Heart right ventricle (tissue), 16 donors: ENCODE measurements at regions of chr12 and their contacts with region 1.

Region 1: GRCh38 chr12:114684098-114684869 is at the start of gene TBX3:
- DNase-seq: peak; percentile 92 to 93
- ATAC-seq: peak; percentile 86 to 96 (median 94)
- H3K4me3 ChIP-seq: peak within 1 kb of the TSS; percentile 48 to 88 (median 76)
- H3K27ac ChIP-seq: peak within 1 kb of the TSS; percentile 78 to 95 (median 88)
- H3K4me1 ChIP-seq: peaks cover 4 to 34% (median 22%) of the 10 kb centered on the region in 9 donors
- H3K27me3 ChIP-seq: peaks cover 17 to 100% (median 43%) of the 10 kb centered on the region in 7 donors
- CTCF ChIP-seq: peak; percentile 19 to 72 (median 45)
- total RNA-seq, gene TBX3: 4.0 to 32.4 (median 11.4) TPM

Region 2: DNA sequence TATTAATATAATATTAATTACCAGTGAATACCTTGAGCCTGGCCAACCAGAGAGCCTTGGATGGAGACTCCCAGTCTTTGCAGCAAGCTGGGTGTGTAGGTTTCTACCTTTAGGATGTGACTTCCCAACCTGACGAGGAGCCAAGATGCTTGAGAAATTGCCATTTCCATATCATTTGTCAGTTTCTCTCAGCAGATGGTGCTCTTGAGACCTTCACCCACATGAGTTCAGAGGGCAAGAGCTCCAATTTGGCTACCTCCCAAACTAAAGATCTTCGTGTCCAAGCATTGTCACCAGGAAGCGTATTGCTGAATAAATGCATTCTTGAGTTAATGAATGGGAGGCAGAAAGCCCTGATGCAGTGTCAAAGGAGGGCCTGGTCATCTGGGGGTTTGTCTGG is 171.9 kb before region 1 on chr12:
- intact Hi-C with region 1: no loop called
- DNase-seq: no peak
- ATAC-seq: no peak
- H3K4me3 ChIP-seq: no peak overlapping the region
- H3K27ac ChIP-seq: no peak overlapping the region
- H3K4me1 ChIP-seq: no peaks in the 10 kb centered on the region
- H3K27me3 ChIP-seq: peaks cover 0 to 63% (median 19%) of the 10 kb centered on the region in 7 donors
- CTCF ChIP-seq: no peak

Region 3: GRCh38 chr12:115013236-115013981 is 329.1 kb after region 1 on chr12:
- intact Hi-C with region 1: loop called in 1 of 10 experiments (anchors 5 kb)
- DNase-seq: peak; percentile 27 to 39
- ATAC-seq: peak; percentile 30 to 86 (median 66)
- H3K4me3 ChIP-seq: no peak overlapping the region
- H3K27ac ChIP-seq: peak overlapping the region in 8 of 10 donors; percentile 6 to 57 (median 34)
- H3K4me1 ChIP-seq: peaks cover 0 to 24% (median 0%) of the 10 kb centered on the region in 9 donors
- H3K27me3 ChIP-seq: peaks cover 0 to 18% (median 0%) of the 10 kb centered on the region in 7 donors
- CTCF ChIP-seq: no peak

Region 4: GRCh38 chr12:115341442-115341841 is 657.2 kb after region 1 on chr12:
- intact Hi-C with region 1: loop called in 3 of 10 experiments (anchors 5 to 10 kb)
- DNase-seq: peak; percentile 23 to 81
- ATAC-seq: peak; percentile 55 to 82 (median 64)
- H3K4me3 ChIP-seq: no peak overlapping the region
- H3K27ac ChIP-seq: peak overlapping the region in 6 of 10 donors; percentile 21 to 76 (median 50)
- H3K4me1 ChIP-seq: peaks cover 0 to 27% (median 11%) of the 10 kb centered on the region in 9 donors
- H3K27me3 ChIP-seq: no peaks in the 10 kb centered on the region
- CTCF ChIP-seq: no peak

Region 5: GRCh38 chr12:115451780-115452736 is 767.8 kb after region 1 on chr12:
- intact Hi-C with region 1: loop called in 1 of 10 experiments (anchors 5 kb)
- DNase-seq: peak; percentile 63 to 67
- ATAC-seq: peak; percentile 66 to 85 (median 74)
- H3K4me3 ChIP-seq: peak overlapping the region in 9 of 10 donors; percentile 24 to 53 (median 39)
- H3K27ac ChIP-seq: peak overlapping the region in 7 of 10 donors; percentile 51 to 81 (median 72)
- H3K4me1 ChIP-seq: peaks cover 0 to 24% (median 4%) of the 10 kb centered on the region in 9 donors
- H3K27me3 ChIP-seq: peaks cover 0 to 29% (median 0%) of the 10 kb centered on the region in 7 donors
- CTCF ChIP-seq: no peak

Region 6: DNA sequence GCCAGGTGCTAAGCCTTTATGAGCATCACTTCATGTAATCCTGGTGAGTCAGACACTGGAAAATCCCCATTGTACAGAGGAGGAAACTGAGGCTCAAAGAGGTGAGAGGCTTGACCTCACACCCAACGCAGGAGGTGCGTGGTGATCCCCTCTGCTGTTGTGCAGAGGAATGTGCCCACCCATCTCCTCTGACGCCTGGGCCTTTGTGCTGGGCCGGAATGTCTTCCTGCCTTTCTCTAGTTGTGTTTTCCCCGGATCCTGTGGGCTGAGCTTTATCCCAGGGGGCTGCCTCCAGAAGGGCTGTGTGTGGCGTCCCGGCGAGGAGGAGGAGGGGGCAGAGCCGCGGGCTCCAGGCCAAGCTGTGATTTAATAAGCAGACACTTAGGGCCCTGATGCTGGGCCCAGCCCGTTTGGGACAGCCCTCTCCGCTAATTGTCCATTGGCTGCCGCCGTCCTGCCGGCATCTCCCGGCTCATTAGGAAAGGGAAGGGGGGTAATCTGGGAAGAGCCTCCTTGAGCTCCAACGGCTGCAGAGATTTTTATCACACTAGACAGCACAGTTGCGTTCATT is 939.6 kb after region 1 on chr12:
- intact Hi-C with region 1: loop called in 2 of 10 experiments (anchors 5 to 10 kb)
- DNase-seq: peak; percentile 77 to 87
- ATAC-seq: peak; percentile 91 to 96 (median 94)
- H3K4me3 ChIP-seq: no peak overlapping the region
- H3K27ac ChIP-seq: peak overlapping the region in 7 of 10 donors; percentile 53 to 74 (median 66)
- H3K4me1 ChIP-seq: peaks cover 0 to 21% (median 5%) of the 10 kb centered on the region in 9 donors
- H3K27me3 ChIP-seq: peaks cover 0 to 9% (median 6%) of the 10 kb centered on the region in 7 donors
- CTCF ChIP-seq: no peak